Pancreas (tissue), 10 donors: ENCODE measurements at regions of chr1 and their contacts with region 1.

Region 1: DNA sequence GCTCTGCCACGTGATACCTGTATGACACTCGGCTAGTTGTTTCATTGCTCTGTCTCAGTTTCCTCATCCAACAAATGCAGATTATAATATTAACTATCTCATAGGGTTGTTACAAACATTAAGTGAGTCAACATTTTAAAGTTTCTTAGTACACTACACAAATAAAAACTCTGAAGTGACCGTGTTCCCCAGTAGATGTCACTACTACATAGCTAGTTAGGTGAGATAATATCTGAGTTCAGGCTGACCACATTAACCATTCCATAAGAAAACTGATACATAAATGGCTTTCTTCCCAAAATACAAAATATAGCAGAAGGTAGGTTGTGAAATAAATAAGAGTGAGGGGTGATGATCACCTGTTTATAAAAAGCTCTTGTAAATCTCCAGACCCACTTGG is 214.1 kb downstream of the NUF2 start:
- DNase-seq: no peak
- ATAC-seq: peak in 3 of 4 donors; percentile 54 to 70 (median 54)
- H3K4me3 ChIP-seq: no peak overlapping the region
- H3K27ac ChIP-seq: no peak overlapping the region
- H3K4me1 ChIP-seq: no peaks in the 10 kb centered on the region
- H3K27me3 ChIP-seq: no peaks in the 10 kb centered on the region
- CTCF ChIP-seq: no peak

Region 2: DNA sequence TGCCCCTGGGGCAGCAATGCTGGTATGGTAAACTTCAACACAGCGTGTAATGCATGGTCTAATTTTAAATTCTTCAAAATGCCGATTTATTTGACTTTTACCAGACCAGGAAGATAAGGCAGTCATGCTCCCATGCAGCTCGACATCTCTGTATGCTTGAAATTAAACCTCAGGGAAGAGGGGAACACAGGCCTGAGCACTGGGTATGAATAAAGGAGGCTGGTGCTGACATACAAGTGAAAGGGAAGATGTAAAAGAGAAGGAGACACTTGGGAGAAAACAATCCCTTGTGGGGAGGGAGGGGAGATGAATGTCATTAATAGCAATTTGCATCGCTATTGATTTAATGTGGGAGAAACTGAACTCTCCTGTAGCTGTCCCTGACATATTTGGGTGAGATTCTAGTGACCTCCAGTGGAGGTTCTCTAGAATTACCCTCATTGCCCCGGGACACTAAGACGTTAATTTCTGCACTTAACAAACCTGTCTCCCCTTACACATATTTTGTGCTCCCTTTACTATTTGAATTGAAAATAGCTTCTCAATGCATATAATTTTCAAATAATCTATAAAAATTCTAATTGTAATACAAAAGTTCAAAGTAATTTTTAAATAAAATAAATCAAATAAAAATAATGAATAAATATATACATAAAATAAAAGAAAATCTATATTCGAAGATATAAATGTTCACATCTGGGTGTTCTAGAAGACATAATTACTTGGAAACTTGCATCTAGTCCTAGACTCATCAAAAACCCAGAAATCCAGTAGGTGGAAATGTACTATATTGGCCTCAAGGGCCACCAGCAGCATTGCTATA is 1537.6 kb after region 1 on chr1:
- intact Hi-C with region 1: loop called in 1 of 3 experiments (anchors 10 kb)
- DNase-seq: peak in 2 of 6 donors; percentile 8 to 28
- ATAC-seq: peak; percentile 66 to 90 (median 86)
- H3K4me3 ChIP-seq: no peak overlapping the region
- H3K27ac ChIP-seq: no peak overlapping the region
- H3K4me1 ChIP-seq: no peaks in the 10 kb centered on the region
- H3K27me3 ChIP-seq: no peaks in the 10 kb centered on the region
- CTCF ChIP-seq: peak; percentile 51 to 69 (median 56)